ENCODE measurements at regions of chr2 and their contacts with region 1.

Region 1: DNA sequence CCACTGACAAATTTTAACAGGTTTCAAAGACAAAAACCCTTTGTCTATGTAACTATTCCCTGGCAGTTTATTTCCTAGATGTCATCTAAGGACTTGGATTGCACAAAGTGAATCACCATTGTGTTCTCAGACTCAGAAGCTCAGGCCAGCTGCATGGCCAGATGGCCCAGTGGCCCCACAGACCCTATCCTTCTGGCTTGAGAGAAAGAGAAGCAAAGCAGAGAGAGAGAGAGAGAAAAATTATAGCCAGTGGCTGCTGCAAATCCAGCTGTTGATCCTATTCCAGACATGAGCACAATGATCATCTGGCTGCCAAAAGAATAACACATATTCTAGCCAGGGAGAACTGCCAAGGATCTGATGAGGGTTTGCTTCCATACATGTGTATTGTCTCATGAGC is 25.8 kb downstream of the CTLA4 start:
- DNase-seq: no peak
- ATAC-seq: no peak
- H3K4me3 ChIP-seq: no peak overlapping the region
- H3K4me3 Mint-ChIP-seq: no peak overlapping the region
- H3K27ac ChIP-seq: no peak overlapping the region
- H3K27ac Mint-ChIP-seq: peak overlapping the region in 1 of 9 donors; percentile 77
- H3K4me1 ChIP-seq: no peaks in the 10 kb centered on the region
- H3K4me1 Mint-ChIP-seq: peaks cover 0 to 66% (median 7%) of the 10 kb centered on the region in 7 donors
- H3K27me3 ChIP-seq: no peaks in the 10 kb centered on the region
- H3K27me3 Mint-ChIP-seq: peaks cover 0 to 6% (median 0%) of the 10 kb centered on the region in 5 donors

Region 2: DNA sequence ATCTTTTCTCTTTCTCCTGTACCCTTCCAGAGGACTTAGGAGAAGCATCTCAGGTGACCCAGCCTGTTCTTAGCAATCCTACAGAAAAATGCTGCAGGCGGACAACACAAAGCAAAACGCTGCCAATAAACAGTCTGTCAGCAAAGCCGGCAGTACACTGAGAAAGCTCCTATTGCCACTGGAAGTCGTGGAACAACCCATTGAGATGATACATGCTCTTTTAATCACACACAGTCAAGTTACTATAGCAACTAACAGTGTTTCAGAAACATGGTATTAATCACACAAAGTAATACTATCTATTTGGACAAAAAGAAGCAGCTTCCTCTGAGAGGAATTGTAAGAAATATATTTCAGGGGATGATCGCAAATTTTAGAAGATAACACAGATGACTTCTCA is 15.3 kb before region 1 on chr2:
- CTCF ChIA-PET with region 1: interaction called, 3 read pairs
- POLR2A ChIA-PET with region 1: interaction called, 5 read pairs
- intact Hi-C with region 1: loop called in 1 of 2 experiments (anchors 2 kb)
- DNase-seq: no peak
- ATAC-seq: no peak
- H3K4me3 ChIP-seq: no peak overlapping the region
- H3K4me3 Mint-ChIP-seq: no peak overlapping the region
- H3K27ac ChIP-seq: no peak overlapping the region
- H3K27ac Mint-ChIP-seq: peak overlapping the region in 3 of 9 donors; percentile 2 to 78 (median 48)
- H3K4me1 ChIP-seq: peaks cover 9 to 10% of the 10 kb centered on the region in 2 donors
- H3K4me1 Mint-ChIP-seq: peaks cover 13 to 34% (median 27%) of the 10 kb centered on the region in 7 donors
- H3K27me3 ChIP-seq: no peaks in the 10 kb centered on the region
- H3K27me3 Mint-ChIP-seq: no peaks in the 10 kb centered on the region